ENCODE measurements at regions of chr5 and their contacts with region 1.

Region 1: DNA sequence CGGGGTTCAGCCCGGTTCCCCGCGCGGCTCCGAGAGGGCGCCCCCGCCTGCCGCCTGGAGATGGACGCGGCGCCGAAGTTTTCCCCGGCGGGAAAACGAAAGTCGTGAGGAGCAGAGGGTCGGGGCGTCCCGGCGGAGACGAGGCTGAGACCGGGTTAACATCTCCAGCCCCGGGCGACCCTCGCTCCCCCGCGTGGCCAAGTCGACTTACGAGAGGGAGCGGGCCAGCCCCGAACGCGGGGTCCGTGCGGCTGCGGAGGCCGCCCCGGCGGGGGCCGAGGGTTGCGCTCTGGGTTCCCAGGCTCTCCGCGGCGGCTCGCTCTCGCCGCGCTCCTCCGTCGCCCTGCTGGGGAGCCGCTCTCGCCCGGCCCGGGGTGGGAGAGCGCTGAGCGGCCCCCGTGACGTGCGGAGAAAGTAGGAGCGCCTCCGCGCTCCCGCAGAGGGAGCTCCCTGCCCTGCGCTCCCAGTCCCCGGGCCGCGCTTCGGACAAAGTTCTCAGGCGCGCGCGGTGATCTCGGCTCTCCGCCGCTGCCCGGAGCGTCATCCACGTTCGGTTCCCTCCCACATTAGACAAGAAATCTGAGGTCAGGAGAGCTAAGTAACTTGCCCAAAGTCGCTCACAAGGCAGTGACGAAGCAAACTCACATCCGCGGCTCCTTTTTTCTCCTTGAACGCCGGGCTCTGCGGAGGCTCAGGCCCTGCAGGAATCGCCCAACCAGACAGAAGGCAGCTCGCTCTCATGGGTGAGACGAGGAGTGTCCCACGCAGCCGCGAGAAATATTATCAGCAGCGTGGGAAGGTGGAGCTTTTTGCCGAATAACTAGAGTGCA is 1.2 kb upstream of the GCNT4 start:
- DNase-seq: peak; percentile 76
- H3K4me3 Mint-ChIP-seq: peak overlapping the region; percentile 79
- H3K27ac Mint-ChIP-seq: peak overlapping the region; percentile 59
- H3K4me1 Mint-ChIP-seq: peaks cover 70% of the 10 kb centered on the region
- H3K27me3 Mint-ChIP-seq: no peaks in the 10 kb centered on the region
- CTCF ChIP-seq: no peak

Region 2: DNA sequence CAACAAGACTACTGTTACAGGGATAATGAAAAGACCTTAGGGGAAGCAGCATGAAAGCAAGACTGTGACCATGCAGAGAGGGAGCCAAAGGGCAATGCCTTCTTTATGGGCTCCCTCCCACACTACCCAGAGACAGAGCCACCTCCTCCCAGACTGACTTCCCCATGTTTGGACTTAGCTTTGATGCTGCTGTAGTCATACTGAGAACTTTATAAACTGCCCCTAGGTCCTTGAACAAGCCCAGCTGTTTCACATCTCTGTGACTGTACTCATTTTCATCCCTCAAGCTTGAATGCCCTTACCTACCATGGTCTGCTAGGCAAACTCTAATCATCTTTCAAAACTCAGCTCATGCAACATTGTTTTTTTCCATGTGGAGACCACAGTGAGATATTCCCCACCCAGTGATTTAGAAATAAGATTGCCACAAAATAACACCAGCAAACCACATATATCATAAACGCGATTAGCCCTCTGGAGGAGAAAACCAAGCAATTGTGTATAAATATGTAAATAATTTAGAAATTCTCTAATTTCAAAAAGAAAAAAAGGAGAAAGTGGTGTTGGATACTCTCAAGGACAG is 163.9 kb before region 1 on chr5:
- CTCF ChIA-PET with region 1: no interaction called
- intact Hi-C with region 1: no loop called
- DNase-seq: no peak
- H3K4me3 Mint-ChIP-seq: no peak overlapping the region
- H3K27ac Mint-ChIP-seq: no peak overlapping the region
- H3K4me1 Mint-ChIP-seq: no peaks in the 10 kb centered on the region
- H3K27me3 Mint-ChIP-seq: no peaks in the 10 kb centered on the region
- CTCF ChIP-seq: no peak

Region 3: DNA sequence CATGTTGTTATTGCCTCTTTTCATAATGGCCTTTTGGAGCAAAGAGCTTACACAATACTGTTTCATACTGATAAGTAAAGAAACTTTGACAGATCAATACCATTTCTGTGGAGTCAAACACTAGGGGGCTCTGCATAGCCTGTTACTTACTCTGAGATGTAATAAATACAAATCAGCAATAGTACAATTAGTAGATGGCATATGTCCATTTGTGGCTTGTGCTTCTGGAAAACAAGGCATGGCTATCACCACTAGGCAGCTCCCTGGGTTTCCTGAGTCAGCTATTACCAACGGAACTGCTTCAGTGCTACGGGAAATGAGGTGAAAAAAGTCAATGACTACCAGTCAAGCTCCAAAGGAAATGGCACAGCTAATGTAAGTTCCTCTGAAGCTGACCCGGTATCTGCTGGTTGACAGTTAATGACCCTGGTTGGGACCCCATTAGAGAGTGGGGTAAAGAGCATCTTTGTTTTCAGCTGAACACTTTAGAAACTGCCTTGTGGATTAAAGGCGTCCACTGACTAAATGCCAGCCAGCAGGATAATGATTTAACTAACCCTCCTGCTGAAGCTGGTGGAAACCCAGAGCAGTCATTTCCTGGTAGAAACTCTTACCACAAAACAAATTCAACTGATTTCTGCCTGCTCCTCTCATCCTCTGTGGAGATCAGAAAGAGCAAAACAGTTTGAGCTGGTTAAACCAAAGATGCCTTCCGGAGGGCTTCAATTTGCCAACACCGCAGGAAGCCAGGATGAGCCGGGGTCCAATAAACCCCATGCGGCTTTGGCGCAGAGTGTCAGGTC is 118.4 kb before region 1 on chr5:
- CTCF ChIA-PET with region 1: interaction called, 14 read pairs
- intact Hi-C with region 1: no loop called
- DNase-seq: peak; percentile 63
- H3K4me3 Mint-ChIP-seq: peak overlapping the region; percentile 41
- H3K27ac Mint-ChIP-seq: peak overlapping the region; percentile 23
- H3K4me1 Mint-ChIP-seq: peaks cover 43% of the 10 kb centered on the region
- H3K27me3 Mint-ChIP-seq: no peaks in the 10 kb centered on the region
- CTCF ChIP-seq: peak; percentile 63

Region 4: DNA sequence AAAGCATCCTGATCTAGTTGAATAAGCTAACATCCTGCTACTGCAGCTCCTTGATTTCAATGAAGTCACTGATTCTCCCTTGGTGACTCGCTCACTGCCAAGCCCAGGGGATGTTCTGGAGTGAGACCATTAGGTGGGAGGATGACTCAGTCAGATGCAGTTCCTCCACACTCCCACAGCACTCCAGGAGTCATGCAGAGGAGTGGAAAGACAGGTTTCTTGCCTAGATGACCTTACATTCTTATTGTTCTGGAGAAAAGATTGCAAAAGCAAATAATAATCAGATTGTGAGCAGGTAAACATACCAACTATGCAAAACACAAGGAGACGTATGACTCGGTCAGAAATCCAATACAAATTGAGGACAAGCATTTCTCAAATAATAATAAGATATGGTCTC is 16.4 kb before region 1 on chr5:
- CTCF ChIA-PET with region 1: interaction called, 16 read pairs
- intact Hi-C with region 1: no loop called
- DNase-seq: peak; percentile 90
- H3K4me3 Mint-ChIP-seq: peak overlapping the region; percentile 22
- H3K27ac Mint-ChIP-seq: peak overlapping the region; percentile 90
- H3K4me1 Mint-ChIP-seq: peaks cover 64% of the 10 kb centered on the region
- H3K27me3 Mint-ChIP-seq: no peaks in the 10 kb centered on the region
- CTCF ChIP-seq: no peak

Region 5: GRCh38 chr5:75265731-75266130 is 212.2 kb after region 1 on chr5:
- CTCF ChIA-PET with region 1: interaction called, 8 read pairs
- intact Hi-C with region 1: loop called (anchors 2 kb)
- DNase-seq: no peak
- H3K4me3 Mint-ChIP-seq: no peak overlapping the region
- H3K27ac Mint-ChIP-seq: no peak overlapping the region
- H3K4me1 Mint-ChIP-seq: peaks cover 30% of the 10 kb centered on the region
- H3K27me3 Mint-ChIP-seq: no peaks in the 10 kb centered on the region
- CTCF ChIP-seq: peak; percentile 43

Region 6: GRCh38 chr5:75281716-75282465 is 228.4 kb after region 1 on chr5:
- CTCF ChIA-PET with region 1: no interaction called
- intact Hi-C with region 1: no loop called
- DNase-seq: no peak
- H3K4me3 Mint-ChIP-seq: no peak overlapping the region
- H3K27ac Mint-ChIP-seq: no peak overlapping the region
- H3K4me1 Mint-ChIP-seq: peaks cover 2% of the 10 kb centered on the region
- H3K27me3 Mint-ChIP-seq: no peaks in the 10 kb centered on the region
- CTCF ChIP-seq: no peak

Measured in Calu3 (cell line).